GM12878 (cell line): ENCODE measurements at regions of chr22 and their contacts with region 1.

Region 1: DNA sequence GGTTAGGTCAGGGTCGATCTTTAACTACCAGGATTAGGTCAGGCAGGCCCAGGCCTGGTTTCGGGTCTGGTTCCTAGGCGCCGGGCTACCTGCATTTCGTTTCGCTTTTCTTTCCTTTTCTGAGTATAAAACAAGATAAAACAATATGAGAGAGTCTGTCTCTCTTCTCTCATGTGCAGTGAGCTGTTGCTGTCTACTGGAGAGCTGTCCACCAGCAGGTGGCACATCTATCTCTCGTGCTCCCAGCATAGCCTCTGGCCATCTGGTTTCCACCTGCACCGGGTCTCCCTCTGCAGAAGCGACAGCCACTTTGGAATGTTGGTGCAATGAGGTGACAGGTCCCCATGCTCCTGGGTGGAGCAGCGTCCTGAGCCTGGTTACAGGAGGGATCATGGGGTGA is 27.6 kb downstream of the RIBC2 start:
- DNase-seq: no peak
- ATAC-seq: peak; percentile 82
- H3K4me3 ChIP-seq: no peak overlapping the region
- H3K27ac ChIP-seq: no peak overlapping the region
- H3K4me1 ChIP-seq: no peaks in the 10 kb centered on the region; the same call in 1 of the 2 replicates
- H3K27me3 ChIP-seq: no peaks in the 10 kb centered on the region; a peak in 1 of 4 replicates
- CTCF ChIP-seq: peak; percentile 35 to 53 (median 52); a peak in 4 of 6 replicates
- EP300 ChIP-seq: no peak
- POLR2A ChIP-seq: no peak
- RAD21 ChIP-seq: peak; percentile 22; the same call in 1 of the 2 replicates

Region 2: DNA sequence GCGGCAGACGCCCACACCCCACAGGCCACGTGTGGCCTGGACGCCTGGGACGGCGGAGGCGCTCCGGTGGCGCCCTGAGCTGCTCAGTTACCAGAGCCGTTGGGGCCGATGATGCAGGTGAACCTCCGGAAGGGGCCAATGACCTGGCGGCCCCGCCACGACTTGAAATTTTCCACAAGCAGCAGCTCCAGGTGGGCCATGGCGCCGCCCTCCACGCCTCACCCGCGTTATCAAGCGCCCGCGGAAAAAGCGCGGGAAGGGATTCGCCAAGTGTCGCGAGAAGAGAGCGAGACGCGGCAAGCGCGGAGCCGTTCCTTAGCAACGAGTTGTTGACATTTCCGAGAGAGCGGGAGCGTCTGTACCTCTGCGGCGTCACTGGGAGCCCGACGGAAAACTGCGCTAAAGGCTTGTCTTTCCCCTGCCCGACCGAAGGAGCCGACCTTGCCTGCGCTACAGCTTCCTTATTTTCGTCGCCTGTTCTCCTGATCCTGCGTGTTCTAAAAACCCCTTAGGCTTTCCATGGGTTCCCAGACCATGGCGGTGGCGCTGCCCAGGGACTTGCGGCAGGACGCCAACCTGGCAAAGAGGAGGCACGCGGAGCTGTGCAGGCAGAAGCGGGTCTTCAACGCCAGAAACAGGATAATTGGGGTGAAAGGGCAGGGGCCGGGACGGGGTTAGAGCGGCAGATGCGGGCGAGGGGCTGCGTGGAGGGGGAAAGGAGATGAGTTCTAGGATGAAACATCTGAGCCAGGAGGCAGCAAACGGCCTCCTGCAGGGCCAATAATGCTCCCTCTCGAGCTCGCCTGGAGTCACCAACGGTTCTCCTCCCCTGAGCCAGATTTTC is 27.5 kb before region 1 on chr22 and contains the starts of genes RIBC2 and SMC1B:
- CTCF ChIA-PET with region 1: no interaction called
- POLR2A ChIA-PET with region 1: no interaction called
- RAD21 ChIA-PET with region 1: no interaction called
- SMC1A ChIA-PET with region 1: no interaction called
- in situ Hi-C with region 1: no loop called
- intact Hi-C with region 1: no loop called
- DNase-seq: peak; percentile 12
- ATAC-seq: no peak
- H3K4me3 ChIP-seq: no peak within 1 kb of the TSS
- H3K27ac ChIP-seq: no peak within 1 kb of the TSS
- H3K4me1 ChIP-seq: no peaks in the 10 kb centered on the region
- H3K27me3 ChIP-seq: peaks cover 1 to 4% of the 10 kb centered on the region in 2 experiments; a peak in 2 of 4 replicates
- CTCF ChIP-seq: no peak
- EP300 ChIP-seq: no peak
- POLR2A ChIP-seq: no peak; the same call in 1 of the 2 replicates
- RAD21 ChIP-seq: no peak
- polyA plus RNA-seq, gene RIBC2: not detected
- polyA plus RNA-seq, gene SMC1B: not detected

Region 3: DNA sequence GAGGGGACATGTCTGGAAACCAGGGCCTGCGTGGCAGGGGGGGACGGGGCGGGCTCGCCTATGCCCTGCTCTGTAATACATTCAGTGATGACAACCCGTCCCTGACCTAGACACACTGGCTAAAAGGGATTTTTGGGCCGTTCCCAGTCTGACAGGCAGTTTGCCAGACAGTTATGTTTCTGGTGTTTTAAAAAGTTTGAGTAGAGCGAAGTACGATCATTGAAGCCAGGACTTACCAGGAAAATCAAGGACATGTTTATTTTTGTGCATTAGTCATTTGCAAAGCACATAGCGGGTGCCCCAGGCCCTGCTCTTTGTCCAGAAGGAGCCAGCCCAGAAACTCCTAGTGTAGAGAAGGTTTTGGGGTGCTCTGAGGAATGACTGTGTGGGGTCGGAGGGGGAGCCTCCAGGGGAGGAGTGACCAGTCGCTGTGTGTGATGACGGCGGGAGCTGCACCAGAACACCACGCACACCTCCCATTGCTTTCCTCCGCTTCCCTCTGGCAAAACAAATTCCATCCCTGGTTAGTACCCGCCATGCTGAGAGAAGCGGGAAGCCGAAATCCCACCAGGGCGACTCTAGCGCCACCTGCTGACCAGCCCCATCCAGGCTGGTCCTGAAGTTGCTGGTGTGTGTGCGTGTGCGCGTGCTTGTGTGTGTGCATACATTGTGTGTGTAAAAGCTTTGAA is 112.4 kb after region 1 on chr22:
- CTCF ChIA-PET with region 1: interaction called, 4 read pairs
- POLR2A ChIA-PET with region 1: no interaction called
- RAD21 ChIA-PET with region 1: no interaction called
- SMC1A ChIA-PET with region 1: no interaction called
- in situ Hi-C with region 1: no loop called
- intact Hi-C with region 1: loop called (anchors 1 kb)
- DNase-seq: no peak
- ATAC-seq: peak; percentile 59; the same call in 2 of the 3 replicates
- H3K4me3 ChIP-seq: no peak overlapping the region
- H3K27ac ChIP-seq: no peak overlapping the region
- H3K4me1 ChIP-seq: no peaks in the 10 kb centered on the region
- H3K27me3 ChIP-seq: no peaks in the 10 kb centered on the region
- CTCF ChIP-seq: peak; percentile 77 to 85 (median 84)
- EP300 ChIP-seq: no peak
- POLR2A ChIP-seq: no peak
- RAD21 ChIP-seq: peak; percentile 60